A549 (cell line): ENCODE measurements at regions of chr20 and their contacts with region 1.

Region 1: DNA sequence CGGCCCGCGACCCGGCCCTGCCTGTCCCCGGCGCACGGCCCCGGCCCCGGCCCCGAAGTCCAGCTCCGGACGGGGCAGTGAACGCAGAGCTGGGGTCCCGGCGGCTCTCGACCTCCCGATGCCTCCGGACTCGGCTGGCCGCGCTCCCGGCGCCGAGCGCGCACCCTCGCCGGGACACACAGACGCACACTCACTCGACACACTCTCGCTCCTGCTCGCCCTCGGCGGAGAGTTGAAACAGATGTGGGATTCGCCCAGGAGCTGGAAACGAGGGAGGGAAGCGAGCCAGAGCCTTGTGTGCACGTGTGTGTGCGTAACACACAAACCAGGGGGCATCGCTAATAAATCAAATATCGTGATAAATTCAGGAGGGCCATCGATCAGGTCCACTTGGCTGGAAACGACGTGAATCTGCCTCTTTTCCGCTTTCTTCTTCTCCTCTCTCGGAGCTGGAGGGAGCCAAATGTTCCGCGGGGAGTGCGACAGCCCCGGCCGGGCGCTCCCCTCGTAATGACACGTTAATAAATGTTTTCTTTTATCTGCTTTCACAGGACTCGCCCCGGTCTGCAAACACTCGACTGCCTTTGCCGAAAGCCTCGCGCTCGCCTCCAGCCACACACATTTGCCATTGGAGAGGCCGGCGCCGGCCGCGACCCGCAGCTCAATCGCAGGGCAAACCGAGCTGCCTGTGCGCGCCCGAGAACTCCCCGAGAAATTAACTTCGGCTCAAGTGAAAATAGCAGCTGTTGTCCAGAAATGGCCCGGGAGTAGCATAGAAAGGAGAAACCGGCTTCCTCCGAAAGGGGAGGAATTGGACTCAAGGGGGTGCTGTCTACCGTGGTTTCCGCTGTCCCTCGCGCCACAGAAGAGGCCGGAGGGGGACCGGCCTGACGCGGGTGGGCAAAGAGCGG is 828 bp upstream of the SULF2 start:
- DNase-seq: peak; percentile 80
- ATAC-seq: peak; percentile 74 to 88
- H3K4me3 ChIP-seq: peak overlapping the region; percentile 69
- H3K27ac ChIP-seq: peak overlapping the region; percentile 73 to 90
- H3K4me1 ChIP-seq: 0 out of 3 replicates have a peak, but pooled peaks cover 12% of the 10 kb centered on the region
- CTCF ChIP-seq: peak; percentile 82
- EP300 ChIP-seq: no peak
- POLR2A ChIP-seq: no peak
- RAD21 ChIP-seq: peak; percentile 89 to 95

Region 2: DNA sequence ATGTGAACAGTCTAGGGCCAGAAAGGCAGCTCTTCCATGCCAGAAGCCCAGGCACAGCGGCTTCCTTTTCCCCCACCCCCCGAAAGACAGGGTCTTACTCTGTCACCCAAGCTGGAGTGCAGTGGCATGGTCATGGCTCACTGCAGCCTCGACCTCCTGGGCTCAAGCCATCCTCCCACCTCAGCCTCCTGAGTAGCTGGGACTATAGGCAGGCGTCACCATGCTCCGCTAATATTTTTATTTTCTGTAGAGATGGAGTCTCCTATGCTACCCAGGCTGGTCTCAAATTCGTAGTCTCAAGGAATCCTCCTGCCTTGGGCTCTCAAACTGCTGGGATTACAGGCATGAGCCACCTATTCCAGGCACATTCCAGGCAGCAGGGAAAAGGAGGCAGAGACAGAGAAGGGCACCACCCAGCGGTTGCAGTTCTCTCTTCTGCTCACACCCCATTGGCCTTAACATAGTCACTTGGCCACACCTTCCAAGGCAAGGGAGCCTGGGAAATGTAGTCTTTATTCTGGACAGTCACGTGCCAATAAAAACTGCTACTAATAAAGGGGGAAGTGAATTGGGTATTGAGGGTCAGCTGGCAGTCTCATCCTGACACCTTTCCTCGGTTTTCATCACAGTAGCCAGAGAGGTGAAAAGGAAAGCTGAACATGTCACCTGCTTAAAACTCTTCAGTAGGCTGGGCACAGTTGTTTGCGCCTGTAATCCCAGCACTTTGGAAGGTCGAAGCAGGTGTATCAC is 635.5 kb before region 1 on chr20:
- CTCF ChIA-PET with region 1: no interaction called
- POLR2A ChIA-PET with region 1: no interaction called
- DNase-seq: peak; percentile 72 to 79
- ATAC-seq: peak; percentile 96 to 99
- H3K4me3 ChIP-seq: no peak overlapping the region
- H3K27ac ChIP-seq: peak overlapping the region in 1 of 2 experiments; percentile 56; a peak in 2 of 6 replicates
- H3K4me1 ChIP-seq: peaks cover 8% of the 10 kb centered on the region; the same call in 1 of the 3 replicates
- CTCF ChIP-seq: peak; percentile 66
- EP300 ChIP-seq: no peak
- POLR2A ChIP-seq: no peak
- RAD21 ChIP-seq: peak; percentile 81 to 91

Region 3: DNA sequence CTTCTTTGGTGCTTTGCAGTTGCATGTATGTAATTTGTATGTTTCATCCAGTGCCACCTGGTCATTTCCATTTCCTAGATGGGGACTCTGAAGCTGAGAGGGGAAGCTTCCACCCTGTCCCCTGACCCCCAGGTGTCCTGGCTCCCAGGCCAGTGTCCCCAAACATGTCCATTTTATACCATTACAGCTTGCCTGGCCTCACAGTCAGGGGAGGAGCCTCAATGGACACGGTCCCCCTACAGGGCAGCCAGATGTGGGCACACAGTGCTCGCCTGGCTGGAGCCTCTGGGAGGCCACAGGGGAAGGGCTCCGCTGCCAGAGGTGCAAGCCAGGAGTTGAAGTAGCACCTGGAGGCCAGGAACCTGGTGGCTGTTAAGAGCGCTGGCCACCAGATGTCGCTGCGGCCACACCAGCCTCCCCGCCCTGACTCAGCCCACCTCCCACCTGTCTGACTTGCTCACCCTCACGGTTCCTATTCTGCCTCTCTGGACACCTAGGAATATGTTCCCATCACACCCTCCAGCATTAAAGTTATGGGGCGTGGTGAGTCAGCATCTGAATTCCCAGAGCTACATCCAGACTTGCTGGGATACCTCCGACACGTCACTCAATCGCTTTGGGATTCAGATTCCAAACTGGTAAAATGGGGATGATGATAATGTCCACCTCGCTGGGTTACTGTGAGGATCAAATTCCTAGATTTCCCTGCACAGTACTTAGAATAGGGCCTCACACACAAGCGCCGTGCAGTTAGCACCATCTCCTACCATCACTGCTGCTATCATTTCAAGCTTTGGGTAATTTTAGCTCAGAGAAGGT is 108.3 kb before region 1 on chr20:
- CTCF ChIA-PET with region 1: interaction called, 20 read pairs
- POLR2A ChIA-PET with region 1: no interaction called
- DNase-seq: peak; percentile 59 to 67
- ATAC-seq: peak; percentile 33 to 71
- H3K4me3 ChIP-seq: no peak overlapping the region
- H3K27ac ChIP-seq: no peak overlapping the region
- H3K4me1 ChIP-seq: no peaks in the 10 kb centered on the region
- CTCF ChIP-seq: peak; percentile 86
- EP300 ChIP-seq: no peak
- POLR2A ChIP-seq: no peak
- RAD21 ChIP-seq: peak; percentile 89 to 91

Region 4: DNA sequence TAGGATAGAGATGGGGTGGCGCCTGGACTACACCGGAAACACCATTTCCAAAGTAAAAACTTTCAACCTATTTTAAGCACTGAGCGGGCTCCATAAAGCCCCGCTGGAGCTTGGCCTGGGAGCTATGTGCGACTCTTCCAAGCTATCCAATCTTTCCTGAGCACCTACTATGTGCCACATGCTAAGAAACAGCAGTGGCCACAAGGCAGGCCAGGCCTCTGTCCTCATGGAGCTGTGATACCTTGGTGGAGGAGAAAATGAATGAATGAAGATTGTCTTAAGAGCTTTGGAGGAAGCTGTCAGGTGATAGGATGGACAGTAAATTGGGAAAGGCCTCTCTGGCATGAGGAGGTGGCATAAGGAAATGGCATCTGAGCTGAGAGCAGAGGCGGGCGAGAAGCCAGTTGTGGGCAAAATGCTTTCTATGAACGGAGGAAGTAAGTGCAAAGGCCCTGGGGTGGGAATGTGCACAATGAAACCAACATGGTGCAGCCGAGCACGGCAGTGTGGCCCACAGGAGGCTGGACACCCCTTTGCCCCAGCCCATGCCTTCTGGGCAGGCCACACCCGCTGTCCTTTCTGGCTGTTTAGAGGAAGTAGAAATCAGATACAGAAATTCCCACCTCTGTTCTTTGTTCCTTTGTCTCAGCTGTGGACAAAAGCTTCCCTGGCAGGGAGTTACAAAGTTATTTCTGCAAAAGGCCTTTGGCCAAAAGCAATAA is 13.0 kb before region 1 on chr20:
- CTCF ChIA-PET with region 1: interaction called, 35 read pairs
- POLR2A ChIA-PET with region 1: no interaction called
- DNase-seq: no peak
- ATAC-seq: no peak
- H3K4me3 ChIP-seq: no peak overlapping the region
- H3K27ac ChIP-seq: no peak overlapping the region
- H3K4me1 ChIP-seq: no peaks in the 10 kb centered on the region
- CTCF ChIP-seq: no peak
- EP300 ChIP-seq: no peak
- POLR2A ChIP-seq: no peak
- RAD21 ChIP-seq: no peak

Region 5: GRCh38 chr20:48180184-48180957 is 394.3 kb after region 1 on chr20:
- CTCF ChIA-PET with region 1: interaction called, 13 read pairs
- POLR2A ChIA-PET with region 1: no interaction called
- DNase-seq: peak; percentile 64 to 76
- ATAC-seq: peak; percentile 47 to 67; a peak in 5 of 6 replicates
- H3K4me3 ChIP-seq: peak overlapping the region; percentile 18; the same call in 1 of the 3 replicates
- H3K27ac ChIP-seq: peak overlapping the region; percentile 37 to 66; a peak in 5 of 6 replicates
- H3K4me1 ChIP-seq: peaks cover 18% of the 10 kb centered on the region
- CTCF ChIP-seq: no peak
- EP300 ChIP-seq: no peak
- POLR2A ChIP-seq: no peak
- RAD21 ChIP-seq: no peak

Region 6: DNA sequence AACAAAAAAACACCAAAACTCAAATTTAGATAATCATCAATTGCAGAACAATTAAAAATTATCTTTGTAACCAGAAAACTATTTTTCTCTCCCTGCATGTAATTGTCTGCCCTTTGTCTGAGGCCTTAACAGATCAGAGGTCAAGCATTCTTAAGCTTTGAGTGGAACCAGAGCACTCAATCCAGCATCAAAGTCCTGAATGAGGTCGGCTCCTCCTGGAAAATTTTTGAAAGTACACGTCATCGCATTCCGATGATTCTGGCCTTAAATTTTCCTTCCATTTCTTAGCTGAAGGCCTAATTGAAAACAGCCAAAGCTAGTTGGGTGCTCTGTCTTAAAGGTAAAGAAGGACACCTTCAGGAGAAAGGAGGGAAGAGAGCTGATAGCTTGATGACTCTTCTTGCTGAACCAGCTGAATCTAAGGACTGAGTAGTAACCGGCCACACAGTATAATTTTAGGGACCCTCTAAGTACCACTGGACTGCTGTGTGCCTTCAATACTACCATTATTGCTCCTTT is 509.4 kb after region 1 on chr20:
- CTCF ChIA-PET with region 1: interaction called, 50 read pairs
- POLR2A ChIA-PET with region 1: interaction called, 10 read pairs
- DNase-seq: peak; percentile 80 to 88
- ATAC-seq: peak; percentile 83 to 87
- H3K4me3 ChIP-seq: no peak overlapping the region
- H3K27ac ChIP-seq: peak overlapping the region; percentile 60 to 85
- H3K4me1 ChIP-seq: peaks cover 57% of the 10 kb centered on the region
- CTCF ChIP-seq: peak; percentile 75
- EP300 ChIP-seq: peak in 1 of 2 experiments; percentile 68; a peak in 2 of 5 replicates
- POLR2A ChIP-seq: no peak
- RAD21 ChIP-seq: peak; percentile 93